ENCODE measurements at regions of chr7 and their contacts with region 1.

Region 1: DNA sequence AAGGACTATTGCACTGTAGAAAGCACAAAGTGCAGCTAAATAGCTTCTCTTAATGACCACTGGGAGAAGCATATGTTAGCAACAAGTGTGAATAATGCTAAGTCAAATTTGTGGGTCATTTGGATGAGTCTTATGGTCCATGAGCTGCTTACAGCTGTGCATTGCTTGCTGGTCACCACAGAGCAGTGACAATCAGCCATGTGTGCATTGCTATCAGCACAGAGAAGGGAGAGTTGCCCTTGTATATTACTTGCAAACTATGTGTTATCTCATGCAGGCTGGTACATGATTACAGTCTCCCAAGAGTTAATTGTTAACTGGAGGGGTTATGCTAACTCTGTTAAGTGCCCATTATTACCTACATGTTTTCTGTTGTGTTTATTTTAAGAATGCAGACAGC is 25.7 kb downstream of the MRPS33 start:
- DNase-seq: peak; percentile 61
- ATAC-seq: peak; percentile 97
- H3K4me3 ChIP-seq: peak overlapping the region in 1 of 3 experiments; percentile 46; a peak in 1 of 6 replicates
- H3K27ac ChIP-seq: no peak overlapping the region
- H3K4me1 ChIP-seq: peaks cover 64% of the 10 kb centered on the region
- H3K27me3 ChIP-seq: no peaks in the 10 kb centered on the region
- CTCF ChIP-seq: no peak
- EP300 ChIP-seq: peak in 1 of 2 experiments; percentile 22; a peak in 1 of 4 replicates
- POLR2A ChIP-seq: no peak
- RAD21 ChIP-seq: no peak

Region 2: DNA sequence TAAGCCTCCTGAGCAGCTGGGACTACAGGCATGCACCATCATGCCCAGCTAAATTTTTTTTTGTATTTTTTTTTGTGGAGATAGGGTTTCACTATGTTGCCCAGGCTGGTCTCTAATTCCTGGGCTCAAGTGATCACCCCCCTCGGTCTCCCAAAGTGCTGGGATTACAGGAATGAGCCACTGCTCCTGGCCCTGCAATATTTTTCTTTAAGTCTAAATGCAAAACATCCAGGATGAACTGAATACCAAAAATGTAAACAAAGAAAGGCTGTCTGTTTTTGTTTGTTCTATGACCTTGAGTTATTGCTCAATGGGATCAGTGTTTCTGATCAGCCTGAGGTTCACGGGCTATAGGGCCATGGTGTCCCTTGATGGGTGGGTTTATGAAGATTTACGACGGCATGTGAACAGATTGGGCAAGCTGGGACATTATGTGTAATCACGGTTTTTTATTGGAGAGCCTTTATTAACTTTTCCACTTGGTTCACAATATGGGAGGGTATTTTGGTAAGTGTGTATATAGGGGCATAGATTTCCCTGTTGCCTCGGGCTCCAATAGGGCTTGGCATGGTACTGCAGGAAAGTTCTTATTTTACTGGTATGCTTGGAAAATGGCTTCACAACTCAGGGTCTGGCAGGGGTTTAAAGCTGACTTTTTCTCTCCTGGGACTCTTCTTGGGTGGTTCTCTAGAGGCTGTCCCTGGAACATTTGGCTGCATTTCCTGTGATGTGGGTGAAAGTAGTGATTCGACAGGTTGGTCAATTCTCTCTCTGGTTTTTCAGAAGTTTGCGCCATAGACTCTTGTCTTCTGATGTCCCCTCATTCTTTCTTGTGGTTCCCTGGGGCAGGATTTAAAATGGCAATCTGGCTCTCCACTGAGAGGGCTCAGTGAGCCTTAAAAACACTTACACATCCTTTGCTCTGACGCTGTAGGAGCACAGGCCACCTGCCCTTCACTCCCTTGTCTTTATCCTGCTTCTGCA is 15.9 kb before region 1 on chr7:
- CTCF ChIA-PET with region 1: no interaction called
- POLR2A ChIA-PET with region 1: no interaction called
- in situ Hi-C with region 1: no loop called
- intact Hi-C with region 1: loop called (anchors 1 kb)
- DNase-seq: peak; percentile 90
- ATAC-seq: peak; percentile 79
- H3K4me3 ChIP-seq: peak overlapping the region; percentile 34 to 43 (median 36); a peak in 5 of 6 replicates
- H3K27ac ChIP-seq: peak overlapping the region; percentile 85
- H3K4me1 ChIP-seq: peaks cover 76% of the 10 kb centered on the region
- H3K27me3 ChIP-seq: no peaks in the 10 kb centered on the region
- CTCF ChIP-seq: no peak
- EP300 ChIP-seq: peak in 1 of 2 experiments; percentile 87; a peak in 2 of 4 replicates
- POLR2A ChIP-seq: no peak
- RAD21 ChIP-seq: no peak

Region 3: DNA sequence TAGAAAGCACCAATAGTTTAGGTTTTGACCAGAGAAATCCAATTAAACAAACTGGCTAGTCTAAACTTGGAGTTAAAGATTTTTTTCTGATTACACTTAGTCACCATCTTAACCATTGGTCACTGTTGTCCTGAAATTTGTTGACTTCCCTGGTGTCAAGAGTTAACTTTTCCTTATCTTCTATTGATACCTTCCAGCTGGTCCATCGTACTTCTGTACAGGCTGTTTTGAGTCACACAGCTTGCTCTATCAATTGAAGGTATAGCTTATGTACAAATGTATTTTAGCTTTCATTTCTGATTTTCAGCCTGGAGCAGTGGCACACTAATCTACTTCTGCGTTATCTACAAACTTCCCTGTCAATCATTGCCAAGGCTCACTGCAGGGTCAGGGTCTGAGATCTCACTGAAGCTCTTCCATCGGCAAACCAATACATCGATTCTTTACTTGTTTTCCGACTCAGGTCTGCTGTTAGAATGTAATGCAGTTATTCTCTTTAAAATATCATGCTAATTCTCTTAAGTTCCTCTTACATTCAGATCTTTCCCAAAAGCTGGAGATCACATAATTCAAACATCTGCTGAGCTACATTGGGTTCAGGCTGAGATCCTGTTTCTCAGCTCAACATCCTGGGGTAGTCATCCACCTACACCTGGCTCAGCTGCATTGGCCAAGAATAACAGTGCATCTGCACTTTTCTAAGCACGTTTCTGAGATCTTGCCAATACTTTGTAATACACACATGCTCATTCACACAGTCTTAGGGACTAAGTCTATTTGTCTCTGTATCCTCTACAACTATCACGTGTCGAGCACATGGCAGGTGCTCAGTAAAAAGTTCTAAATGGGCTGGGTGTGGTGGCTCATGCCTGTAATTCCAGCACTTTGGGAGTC is 14.4 kb after region 1 on chr7:
- CTCF ChIA-PET with region 1: no interaction called
- POLR2A ChIA-PET with region 1: no interaction called
- in situ Hi-C with region 1: no loop called
- intact Hi-C with region 1: loop called (anchors 2 kb)
- DNase-seq: peak; percentile 51
- ATAC-seq: peak; percentile 90
- H3K4me3 ChIP-seq: peak overlapping the region in 2 of 3 experiments; percentile 4 to 51; a peak in 2 of 6 replicates
- H3K27ac ChIP-seq: peak overlapping the region; percentile 50
- H3K4me1 ChIP-seq: peaks cover 57% of the 10 kb centered on the region
- H3K27me3 ChIP-seq: no peaks in the 10 kb centered on the region
- CTCF ChIP-seq: no peak
- EP300 ChIP-seq: no peak
- POLR2A ChIP-seq: no peak
- RAD21 ChIP-seq: no peak

Region 4: DNA sequence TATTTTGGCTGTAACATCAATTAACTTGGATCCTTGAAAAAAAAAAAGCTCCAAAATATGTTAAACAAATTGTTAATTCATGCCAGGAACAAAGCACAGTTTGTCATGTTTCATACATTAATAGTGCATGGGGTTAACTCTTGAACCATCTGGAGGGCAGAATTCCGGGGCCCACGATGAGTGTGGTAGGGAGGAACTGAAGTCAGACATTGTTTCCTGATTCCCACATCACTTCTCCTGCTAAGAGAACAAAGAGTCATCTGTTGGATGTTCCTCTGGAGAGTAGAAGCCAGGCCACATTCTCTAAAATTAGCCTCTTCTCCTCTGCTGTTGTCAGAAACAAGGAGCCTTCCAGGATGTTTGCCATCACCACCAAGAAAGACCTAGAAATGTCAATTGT is 139.4 kb after region 1 on chr7:
- CTCF ChIA-PET with region 1: no interaction called
- POLR2A ChIA-PET with region 1: no interaction called
- in situ Hi-C with region 1: no loop called
- intact Hi-C with region 1: no loop called
- DNase-seq: no peak
- ATAC-seq: no peak
- H3K4me3 ChIP-seq: no peak overlapping the region
- H3K27ac ChIP-seq: no peak overlapping the region
- H3K4me1 ChIP-seq: no peaks in the 10 kb centered on the region
- H3K27me3 ChIP-seq: peaks cover 0 to 7% of the 10 kb centered on the region in 2 experiments; a peak in 1 of 5 replicates
- CTCF ChIP-seq: no peak
- EP300 ChIP-seq: no peak
- POLR2A ChIP-seq: no peak
- RAD21 ChIP-seq: no peak

Measured in HepG2 (cell line).